GM12878 (cell line): ENCODE measurements at regions of chr19 and their contacts with region 1.

Region 1: GRCh38 chr19:47514869-47515588 is at the start of gene NAPA:
- DNase-seq: peak; percentile 99
- ATAC-seq: peak; percentile 95
- H3K4me3 ChIP-seq: peak within 1 kb of the TSS; percentile 84
- H3K27ac ChIP-seq: peak within 1 kb of the TSS; percentile 98
- H3K4me1 ChIP-seq: peaks cover 40% of the 10 kb centered on the region
- H3K27me3 ChIP-seq: no peaks in the 10 kb centered on the region
- CTCF ChIP-seq: no peak
- EP300 ChIP-seq: peak in 1 of 2 experiments; percentile 63; a peak in 2 of 4 replicates
- POLR2A ChIP-seq: peak; percentile 94
- RAD21 ChIP-seq: peak; percentile 60
- polyA plus RNA-seq, gene NAPA: 8.2 to 17.4 TPM

Region 2: DNA sequence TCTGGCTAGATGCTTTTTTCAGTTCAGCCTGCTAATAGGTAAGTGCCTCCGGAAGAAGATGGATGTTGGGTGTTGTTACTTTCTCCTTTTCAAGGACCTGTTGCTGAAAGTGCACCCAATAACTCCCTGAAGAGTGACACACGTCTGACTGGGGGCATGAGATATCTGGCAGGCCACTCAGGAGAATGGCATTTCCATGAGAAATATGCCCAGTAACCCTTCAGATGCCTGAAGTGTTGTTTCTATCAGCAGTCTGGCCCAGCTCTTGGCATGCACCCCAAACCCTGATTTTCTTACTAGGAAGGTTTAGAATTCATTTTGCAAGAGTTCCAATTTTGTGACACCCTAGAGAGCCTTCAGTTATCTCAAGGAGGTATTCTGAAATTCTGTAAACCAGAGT is 582.7 kb before region 1 on chr19:
- CTCF ChIA-PET with region 1: no interaction called
- POLR2A ChIA-PET with region 1: no interaction called
- RAD21 ChIA-PET with region 1: no interaction called
- SMC1A ChIA-PET with region 1: no interaction called
- in situ Hi-C with region 1: no loop called
- intact Hi-C with region 1: loop called (anchors 5 kb)
- DNase-seq: no peak
- ATAC-seq: no peak
- H3K4me3 ChIP-seq: no peak overlapping the region
- H3K27ac ChIP-seq: no peak overlapping the region
- H3K4me1 ChIP-seq: peaks cover 8% of the 10 kb centered on the region
- H3K27me3 ChIP-seq: no peaks in the 10 kb centered on the region
- CTCF ChIP-seq: no peak
- EP300 ChIP-seq: no peak
- POLR2A ChIP-seq: no peak
- RAD21 ChIP-seq: no peak

Region 3: DNA sequence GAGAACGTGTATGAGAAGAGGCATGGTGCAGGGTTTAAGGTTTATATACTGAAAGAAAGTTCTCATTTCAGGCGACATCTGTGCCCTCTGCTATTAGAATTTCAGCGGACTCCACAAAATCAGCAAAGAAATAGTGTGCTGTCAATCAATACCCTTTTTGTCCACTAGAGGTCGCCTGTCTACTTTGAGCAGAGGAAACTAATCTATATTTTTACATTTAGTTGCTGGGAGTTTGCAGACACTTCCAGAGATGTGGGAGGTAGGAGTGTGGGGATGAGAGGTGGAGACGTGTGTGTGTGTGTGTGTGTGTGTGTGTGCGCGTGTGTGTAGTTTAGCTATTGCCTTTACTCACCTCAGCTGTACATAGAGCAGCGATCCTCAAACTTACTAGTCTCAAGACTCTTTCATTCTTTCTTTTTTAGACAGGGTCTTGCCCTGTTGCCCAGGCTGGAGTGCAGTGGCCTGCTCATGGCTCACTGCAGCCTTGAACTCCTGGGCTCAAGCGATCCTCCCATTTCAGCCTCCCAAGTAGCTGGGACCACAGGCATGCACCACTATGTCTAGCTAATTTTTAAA is 230.6 kb before region 1 on chr19:
- CTCF ChIA-PET with region 1: no interaction called
- POLR2A ChIA-PET with region 1: no interaction called
- RAD21 ChIA-PET with region 1: no interaction called
- SMC1A ChIA-PET with region 1: no interaction called
- in situ Hi-C with region 1: no loop called
- intact Hi-C with region 1: loop called (anchors 10 kb)
- DNase-seq: no peak
- ATAC-seq: peak; percentile 46
- H3K4me3 ChIP-seq: no peak overlapping the region
- H3K27ac ChIP-seq: no peak overlapping the region
- H3K4me1 ChIP-seq: peaks cover 15% of the 10 kb centered on the region
- H3K27me3 ChIP-seq: no peaks in the 10 kb centered on the region
- CTCF ChIP-seq: peak; percentile 73 to 85 (median 79)
- EP300 ChIP-seq: no peak
- POLR2A ChIP-seq: no peak
- RAD21 ChIP-seq: peak; percentile 58

Region 4: DNA sequence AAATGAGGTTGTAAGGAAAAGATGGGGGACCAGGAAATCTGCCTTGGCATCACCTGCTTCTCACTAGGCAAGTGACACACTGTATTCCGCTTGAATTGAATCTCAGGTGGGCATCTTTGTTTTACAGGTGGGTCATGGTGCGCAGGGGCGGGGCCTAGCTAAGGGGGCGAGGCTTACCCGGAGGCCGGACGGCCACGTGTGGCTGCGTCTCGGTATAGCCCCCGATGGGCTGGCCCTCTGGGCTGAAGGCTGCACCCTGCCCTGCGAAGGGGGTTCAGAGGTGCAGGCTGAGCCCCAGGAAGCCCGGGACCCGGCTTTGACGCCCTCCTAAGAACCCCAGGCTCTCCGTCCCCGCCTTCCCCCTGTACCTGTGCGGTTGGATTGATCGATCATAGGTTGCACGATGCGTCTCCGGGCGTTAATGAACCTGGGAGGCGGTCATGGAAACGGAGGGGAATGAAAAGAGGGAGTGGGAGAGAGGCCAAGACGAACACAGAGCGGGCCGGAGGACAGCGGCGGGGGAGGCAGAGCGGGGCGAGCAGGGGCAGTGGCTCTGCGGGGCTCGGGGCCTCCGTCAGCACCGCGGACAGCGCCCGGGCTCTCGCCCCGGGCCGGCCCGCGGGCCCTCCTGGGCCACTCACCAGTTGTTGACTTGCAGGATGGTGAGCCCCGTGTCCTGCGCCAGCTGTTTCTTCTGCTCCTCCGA is 108.2 kb before region 1 on chr19:
- CTCF ChIA-PET with region 1: no interaction called
- POLR2A ChIA-PET with region 1: no interaction called
- RAD21 ChIA-PET with region 1: no interaction called
- SMC1A ChIA-PET with region 1: no interaction called
- in situ Hi-C with region 1: no loop called
- intact Hi-C with region 1: no loop called
- DNase-seq: no peak
- ATAC-seq: peak; percentile 38; the same call in 2 of the 3 replicates
- H3K4me3 ChIP-seq: no peak overlapping the region
- H3K27ac ChIP-seq: no peak overlapping the region
- H3K4me1 ChIP-seq: no peaks in the 10 kb centered on the region
- H3K27me3 ChIP-seq: no peaks in the 10 kb centered on the region; a peak in 1 of 4 replicates
- CTCF ChIP-seq: no peak
- EP300 ChIP-seq: no peak
- POLR2A ChIP-seq: no peak
- RAD21 ChIP-seq: no peak

Region 5: GRCh38 chr19:47436712-47437401 is 78.2 kb before region 1 on chr19:
- CTCF ChIA-PET with region 1: interaction called, 24 read pairs
- POLR2A ChIA-PET with region 1: no interaction called
- RAD21 ChIA-PET with region 1: interaction called, 12 read pairs
- SMC1A ChIA-PET with region 1: interaction called, 5 read pairs
- in situ Hi-C with region 1: no loop called
- intact Hi-C with region 1: loop called (anchors 2 kb)
- DNase-seq: no peak
- ATAC-seq: peak; percentile 96
- H3K4me3 ChIP-seq: no peak overlapping the region
- H3K27ac ChIP-seq: no peak overlapping the region
- H3K4me1 ChIP-seq: no peaks in the 10 kb centered on the region; the same call in none of the 2 replicates
- H3K27me3 ChIP-seq: no peaks in the 10 kb centered on the region; a peak in 2 of 4 replicates
- CTCF ChIP-seq: peak; percentile 77 to 88 (median 85)
- EP300 ChIP-seq: no peak
- POLR2A ChIP-seq: no peak
- RAD21 ChIP-seq: peak; percentile 95

Region 6: DNA sequence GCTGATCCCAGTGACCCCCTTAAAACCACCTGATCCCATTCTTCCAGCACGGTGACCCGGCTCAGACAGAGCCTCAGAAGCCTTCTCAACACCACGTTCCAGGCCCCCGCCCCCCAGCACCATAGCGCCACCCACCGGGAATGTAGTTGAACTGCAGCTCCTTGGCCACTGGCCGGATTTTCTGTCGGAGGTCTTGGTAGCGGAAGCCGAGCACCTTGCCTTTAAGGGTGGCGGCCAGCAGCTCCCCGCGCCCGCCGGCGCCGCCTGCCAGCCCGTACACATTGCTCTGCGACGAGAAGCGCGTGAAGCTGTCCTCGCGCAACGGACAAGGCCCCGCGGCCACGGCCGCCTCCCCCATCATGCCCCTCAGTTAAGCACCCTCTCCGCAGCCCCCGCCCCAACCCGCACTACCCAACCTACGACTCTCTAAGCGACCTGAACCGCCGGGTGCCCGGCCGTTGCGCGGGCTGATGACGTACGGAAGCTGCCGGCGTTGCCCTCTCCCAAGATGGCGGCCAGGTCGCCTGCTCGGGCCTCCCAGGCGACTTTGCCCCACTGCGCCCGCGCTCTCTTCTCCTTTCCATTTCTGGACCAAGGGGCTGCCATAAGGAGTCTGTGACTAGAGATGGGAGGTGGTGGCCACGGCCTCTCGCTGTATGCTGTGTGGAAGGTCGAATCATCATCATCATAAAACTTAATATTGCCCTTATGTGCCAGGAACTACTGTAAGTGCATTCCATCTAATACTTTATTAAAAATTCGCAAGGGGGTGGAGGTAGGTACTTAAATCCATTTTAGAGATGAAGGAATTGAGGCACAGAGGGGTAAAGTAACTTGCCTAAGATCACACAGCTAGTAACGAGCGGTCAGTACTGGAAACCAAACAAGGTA is 31.0 kb before region 1 on chr19 and contains the start of gene KPTN:
- CTCF ChIA-PET with region 1: interaction called, 20 read pairs
- POLR2A ChIA-PET with region 1: interaction called, 12 read pairs
- RAD21 ChIA-PET with region 1: interaction called, 4 read pairs
- SMC1A ChIA-PET with region 1: interaction called, 16 read pairs
- in situ Hi-C with region 1: no loop called
- intact Hi-C with region 1: loop called (anchors 2 kb)
- DNase-seq: peak; percentile 57
- ATAC-seq: peak; percentile 88
- H3K4me3 ChIP-seq: peak within 1 kb of the TSS; percentile 96
- H3K27ac ChIP-seq: peak within 1 kb of the TSS; percentile 89
- H3K4me1 ChIP-seq: peaks cover 35% of the 10 kb centered on the region
- H3K27me3 ChIP-seq: no peaks in the 10 kb centered on the region
- CTCF ChIP-seq: peak; percentile 87 to 99 (median 97)
- EP300 ChIP-seq: no peak
- POLR2A ChIP-seq: peak; percentile 91
- RAD21 ChIP-seq: peak; percentile 66
- polyA plus RNA-seq, gene KPTN: 0.60 to 2.1 TPM

Region 7: DNA sequence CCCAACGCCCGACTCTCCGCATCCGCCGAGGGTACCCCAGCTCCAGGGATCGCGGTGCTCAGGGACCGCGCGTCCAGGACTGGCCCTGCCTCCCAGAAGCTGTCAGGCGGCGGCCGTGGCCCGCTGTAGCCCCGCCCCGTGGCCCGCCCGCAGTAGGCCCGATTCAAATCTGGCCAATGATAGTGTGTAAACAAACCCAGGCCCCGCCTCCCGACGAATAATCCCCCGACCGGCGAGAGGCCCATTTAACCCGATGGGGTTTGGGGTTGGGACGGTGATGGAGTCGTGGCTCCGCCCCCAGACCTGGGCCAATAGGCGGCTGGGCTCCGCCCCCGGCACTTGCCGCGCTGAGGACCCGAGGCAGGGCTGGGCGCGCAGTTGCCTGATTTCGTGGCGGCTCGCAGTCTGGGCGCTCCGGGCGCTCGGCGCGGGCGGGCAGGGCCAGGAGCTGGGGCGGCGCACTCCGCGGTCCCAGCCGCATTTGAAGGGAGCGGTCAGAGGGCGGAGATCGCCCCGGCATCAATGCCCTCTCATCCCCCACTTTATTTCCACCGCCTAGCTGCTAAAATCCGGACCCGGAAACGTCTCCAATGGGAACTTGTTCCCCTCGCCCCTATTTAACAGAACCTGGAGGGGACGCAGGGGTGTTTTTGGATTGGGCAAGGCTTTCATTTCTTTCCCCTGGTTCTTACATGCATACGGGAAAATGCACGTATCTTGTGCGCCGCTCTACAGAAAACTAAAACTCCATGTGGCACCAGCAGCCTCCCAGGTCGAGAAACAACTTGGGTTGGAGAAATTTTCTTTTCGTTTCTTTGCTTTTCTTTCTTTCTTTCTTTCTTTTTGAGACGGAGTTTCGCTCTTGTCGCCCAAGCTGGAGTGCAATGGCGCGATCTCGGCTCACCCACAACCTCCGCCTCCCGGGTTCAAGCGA is 85.5 kb after region 1 on chr19:
- CTCF ChIA-PET with region 1: interaction called, 14 read pairs
- POLR2A ChIA-PET with region 1: interaction called, 4 read pairs
- RAD21 ChIA-PET with region 1: interaction called, 3 read pairs
- SMC1A ChIA-PET with region 1: interaction called, 4 read pairs
- in situ Hi-C with region 1: no loop called
- intact Hi-C with region 1: loop called (anchors 2 kb)
- DNase-seq: peak; percentile 94
- ATAC-seq: peak; percentile 98
- H3K4me3 ChIP-seq: peak overlapping the region; percentile 75
- H3K27ac ChIP-seq: peak overlapping the region; percentile 73
- H3K4me1 ChIP-seq: peaks cover 11% of the 10 kb centered on the region
- H3K27me3 ChIP-seq: no peaks in the 10 kb centered on the region
- CTCF ChIP-seq: no peak
- EP300 ChIP-seq: no peak
- POLR2A ChIP-seq: peak; percentile 98
- RAD21 ChIP-seq: no peak

Region 8: DNA sequence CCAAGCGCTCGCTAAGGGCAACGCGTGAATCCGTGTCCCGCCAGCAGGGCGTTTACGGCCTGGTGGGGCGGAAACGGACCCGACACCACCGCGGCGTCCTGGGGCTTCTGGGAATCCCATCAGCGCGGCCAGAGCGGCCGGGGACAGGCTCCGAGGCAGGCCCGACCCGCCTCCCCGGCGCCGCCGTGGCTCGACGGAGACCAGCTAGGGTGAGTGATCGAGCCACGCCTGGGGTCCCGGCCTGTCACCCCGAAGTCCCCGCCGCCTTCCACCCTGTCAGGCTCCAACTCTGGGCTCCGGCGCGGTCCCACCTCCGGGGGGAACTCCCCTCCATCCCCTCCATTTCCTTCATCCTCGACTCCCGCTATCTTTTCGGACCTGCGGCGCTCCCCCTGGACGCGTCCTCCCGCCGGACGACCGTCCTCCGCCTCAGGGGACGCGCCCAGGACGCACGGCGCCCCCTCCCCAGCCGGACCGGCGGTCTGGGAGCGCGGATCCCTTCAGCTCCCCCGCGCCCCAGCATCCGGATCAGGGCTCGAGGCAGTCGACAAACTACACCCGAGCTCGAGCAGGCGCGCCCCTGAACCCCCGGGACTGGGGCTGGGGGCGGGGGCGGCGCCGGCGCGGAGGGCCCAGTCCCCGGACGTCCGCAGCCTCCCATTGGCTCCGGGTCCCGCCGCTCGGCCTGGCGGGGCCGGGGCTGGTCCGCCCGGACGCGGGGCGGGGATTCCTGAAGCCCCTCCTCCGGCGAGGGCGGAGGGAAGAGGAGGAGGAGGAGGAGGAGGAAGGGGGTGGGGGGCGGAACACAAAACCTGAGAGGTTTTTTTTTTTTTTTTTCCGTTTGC is 93.3 kb after region 1 on chr19:
- CTCF ChIA-PET with region 1: interaction called, 3 read pairs
- POLR2A ChIA-PET with region 1: interaction called, 6 read pairs
- RAD21 ChIA-PET with region 1: interaction called, 6 read pairs
- SMC1A ChIA-PET with region 1: interaction called, 6 read pairs
- in situ Hi-C with region 1: no loop called
- intact Hi-C with region 1: loop called (anchors 1 kb)
- DNase-seq: peak; percentile 68
- ATAC-seq: peak; percentile 96
- H3K4me3 ChIP-seq: peak overlapping the region; percentile 97
- H3K27ac ChIP-seq: peak overlapping the region; percentile 94
- H3K4me1 ChIP-seq: peaks cover 8% of the 10 kb centered on the region; the same call in 1 of the 2 replicates
- H3K27me3 ChIP-seq: no peaks in the 10 kb centered on the region
- CTCF ChIP-seq: peak in 1 of 3 experiments; percentile 36; a peak in 2 of 6 replicates
- EP300 ChIP-seq: no peak
- POLR2A ChIP-seq: peak; percentile 88
- RAD21 ChIP-seq: no peak

Region 9: DNA sequence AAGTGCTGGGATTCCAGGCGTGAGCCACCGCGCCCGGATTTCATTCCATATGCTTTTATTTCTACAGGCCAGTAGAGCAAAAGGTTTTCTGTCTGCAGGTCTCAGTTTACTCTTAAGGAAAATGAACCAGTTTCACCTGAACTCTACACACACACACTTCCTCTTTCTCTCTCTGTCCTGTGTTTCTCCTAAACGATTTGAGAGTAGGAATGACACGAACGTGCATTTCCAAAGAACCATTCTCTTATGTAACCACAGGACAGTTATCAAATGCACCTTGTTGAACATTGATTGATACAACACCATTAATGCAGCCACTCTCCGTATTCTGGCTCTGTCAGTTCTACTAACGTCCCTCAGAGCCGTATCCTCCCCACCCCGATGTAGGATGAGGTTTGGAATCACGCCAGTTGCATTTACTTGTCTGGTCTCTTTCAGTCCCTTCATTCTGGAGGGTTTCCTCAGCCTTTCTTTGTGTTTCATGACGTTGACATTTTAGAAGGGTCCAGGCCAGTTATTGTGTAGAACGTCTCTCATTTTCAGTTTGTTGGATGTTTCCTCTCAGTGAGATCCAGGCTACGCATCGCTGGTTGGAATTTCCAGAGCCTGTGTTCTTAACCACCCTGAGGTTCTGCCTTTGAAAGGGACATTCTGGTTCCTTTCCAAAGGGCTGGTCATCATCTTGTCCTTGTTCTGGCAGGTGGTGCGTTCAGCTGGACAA is 129.9 kb after region 1 on chr19:
- CTCF ChIA-PET with region 1: no interaction called
- POLR2A ChIA-PET with region 1: no interaction called
- RAD21 ChIA-PET with region 1: no interaction called
- SMC1A ChIA-PET with region 1: no interaction called
- in situ Hi-C with region 1: no loop called
- intact Hi-C with region 1: no loop called
- DNase-seq: no peak
- ATAC-seq: no peak
- H3K4me3 ChIP-seq: no peak overlapping the region
- H3K27ac ChIP-seq: no peak overlapping the region
- H3K4me1 ChIP-seq: no peaks in the 10 kb centered on the region
- H3K27me3 ChIP-seq: no peaks in the 10 kb centered on the region
- CTCF ChIP-seq: no peak
- EP300 ChIP-seq: no peak
- POLR2A ChIP-seq: no peak
- RAD21 ChIP-seq: no peak